MCF 10A (cell line): ENCODE measurements at regions of chr17 and their contacts with region 1.

Region 1: DNA sequence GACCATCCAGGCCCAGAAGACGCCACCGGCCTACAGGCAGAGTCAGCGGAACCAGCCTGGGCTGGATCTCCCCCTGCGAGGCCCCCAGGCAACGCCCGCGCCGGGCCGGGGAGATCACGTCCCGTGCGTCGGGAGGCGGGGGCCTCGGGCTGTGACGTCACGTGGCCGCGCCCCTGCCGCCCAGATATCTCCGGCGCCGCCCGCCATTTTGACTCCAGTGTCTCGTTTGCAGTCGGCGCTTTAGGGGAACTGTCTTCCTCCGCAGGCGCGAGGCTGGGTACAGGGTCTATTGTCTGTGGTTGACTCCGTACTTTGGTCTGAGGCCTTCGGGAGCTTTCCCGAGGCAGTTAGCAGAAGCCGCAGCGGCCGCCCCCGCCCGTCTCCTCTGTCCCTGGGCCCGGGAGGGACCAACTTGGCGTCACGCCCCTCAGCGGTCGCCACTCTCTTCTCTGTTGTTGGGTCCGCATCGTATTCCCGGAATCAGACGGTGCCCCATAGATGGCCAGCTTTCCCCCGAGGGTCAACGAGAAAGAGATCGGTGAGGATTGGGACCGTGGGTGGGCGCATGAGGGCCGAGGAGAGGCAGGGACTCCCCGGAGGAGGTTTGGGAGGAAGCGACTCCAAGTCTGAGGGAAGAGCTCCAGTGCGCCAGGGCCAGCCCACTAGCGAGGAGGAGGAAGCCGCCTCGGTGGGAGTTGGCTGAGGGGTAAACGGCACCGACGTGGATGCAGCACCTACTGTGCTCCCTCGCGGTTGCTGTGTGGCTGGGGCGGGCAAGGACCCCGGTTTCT is at the start of gene WSB1:
- DNase-seq: peak; percentile 89
- H3K4me3 Mint-ChIP-seq: peak within 1 kb of the TSS; percentile 89
- H3K27ac Mint-ChIP-seq: peak within 1 kb of the TSS; percentile 96
- H3K4me1 Mint-ChIP-seq: peaks cover 12% of the 10 kb centered on the region
- H3K27me3 Mint-ChIP-seq: no peaks in the 10 kb centered on the region
- CTCF ChIP-seq: no peak
- total RNA-seq, gene WSB1: 93.1 and 145 TPM in 2 replicates

Region 2: GRCh38 chr17:27245230-27245696 is 48.8 kb before region 1 on chr17:
- CTCF ChIA-PET with region 1: interaction called, 7 read pairs
- POLR2A ChIA-PET with region 1: interaction called, 90 read pairs
- intact Hi-C with region 1: loop called (anchors 1 kb)
- DNase-seq: peak; percentile 89
- H3K4me3 Mint-ChIP-seq: peak overlapping the region; percentile 49
- H3K27ac Mint-ChIP-seq: peak overlapping the region; percentile 74
- H3K4me1 Mint-ChIP-seq: peaks cover 48% of the 10 kb centered on the region
- H3K27me3 Mint-ChIP-seq: peaks cover 4% of the 10 kb centered on the region
- CTCF ChIP-seq: peak; percentile 68

Region 3: DNA sequence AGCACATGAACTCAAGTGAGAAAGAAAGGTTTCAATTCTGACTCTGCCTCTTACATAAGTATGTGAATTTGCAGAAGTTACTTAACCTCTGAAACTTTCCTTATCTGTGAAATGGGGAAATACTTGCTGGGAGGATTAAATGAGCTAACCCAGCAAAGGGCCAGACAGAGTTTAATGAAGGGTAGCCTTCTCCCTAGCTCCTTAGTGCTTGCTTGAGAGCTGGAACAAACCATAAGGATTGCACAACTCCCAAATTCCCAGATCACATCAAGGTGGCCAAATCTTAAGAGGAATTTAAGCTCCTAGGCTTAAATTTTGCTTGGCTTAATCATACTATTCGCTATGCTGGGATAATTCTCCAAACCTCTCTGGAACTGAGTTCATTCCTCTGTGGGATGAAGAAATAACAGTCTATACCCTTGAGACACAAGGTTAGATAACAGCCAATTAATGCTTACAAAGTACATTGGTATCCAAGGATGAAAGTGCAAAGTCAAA is 12.0 kb before region 1 on chr17:
- CTCF ChIA-PET with region 1: interaction called, 5 read pairs
- POLR2A ChIA-PET with region 1: interaction called, 42 read pairs
- intact Hi-C with region 1: no loop called
- DNase-seq: peak; percentile 45
- H3K4me3 Mint-ChIP-seq: no peak overlapping the region
- H3K27ac Mint-ChIP-seq: no peak overlapping the region
- H3K4me1 Mint-ChIP-seq: peaks cover 11% of the 10 kb centered on the region
- H3K27me3 Mint-ChIP-seq: no peaks in the 10 kb centered on the region
- CTCF ChIP-seq: no peak

Region 4: GRCh38 chr17:27315322-27315721 is 21.2 kb after region 1 on chr17:
- CTCF ChIA-PET with region 1: interaction called, 5 read pairs
- POLR2A ChIA-PET with region 1: interaction called, 53 read pairs
- intact Hi-C with region 1: no loop called
- DNase-seq: peak; percentile 28
- H3K4me3 Mint-ChIP-seq: no peak overlapping the region
- H3K27ac Mint-ChIP-seq: peak overlapping the region; percentile 54
- H3K4me1 Mint-ChIP-seq: peaks cover 17% of the 10 kb centered on the region
- H3K27me3 Mint-ChIP-seq: no peaks in the 10 kb centered on the region
- CTCF ChIP-seq: no peak

Region 5: GRCh38 chr17:27332485-27333409 is 38.7 kb after region 1 on chr17:
- CTCF ChIA-PET with region 1: interaction called, 4 read pairs
- POLR2A ChIA-PET with region 1: interaction called, 68 read pairs
- intact Hi-C with region 1: loop called (anchors 2 kb)
- DNase-seq: peak; percentile 98
- H3K4me3 Mint-ChIP-seq: peak overlapping the region; percentile 71
- H3K27ac Mint-ChIP-seq: peak overlapping the region; percentile 79
- H3K4me1 Mint-ChIP-seq: peaks cover 34% of the 10 kb centered on the region
- H3K27me3 Mint-ChIP-seq: no peaks in the 10 kb centered on the region
- CTCF ChIP-seq: peak; percentile 98

Region 6: DNA sequence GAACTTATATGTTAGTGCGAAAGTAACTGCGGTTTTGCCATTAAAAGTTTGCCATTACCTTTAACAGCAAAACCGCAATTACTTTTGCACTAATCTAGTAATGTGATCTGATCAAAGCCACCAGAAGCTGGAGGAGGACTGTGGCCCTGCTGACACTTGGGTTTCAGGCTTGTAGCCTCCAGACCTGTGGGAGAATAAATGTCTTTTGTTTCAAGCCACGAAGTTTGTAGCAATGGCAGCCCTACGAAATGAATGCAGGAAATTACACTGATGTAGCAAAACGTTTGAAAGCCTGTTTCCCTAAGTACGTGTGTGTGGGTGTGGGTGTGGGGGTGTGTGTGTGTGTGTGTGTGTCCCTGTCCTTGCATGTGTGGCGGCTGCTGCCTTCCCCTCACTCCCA is 66.4 kb after region 1 on chr17:
- CTCF ChIA-PET with region 1: no interaction called
- POLR2A ChIA-PET with region 1: no interaction called
- intact Hi-C with region 1: no loop called
- DNase-seq: no peak
- H3K4me3 Mint-ChIP-seq: no peak overlapping the region
- H3K27ac Mint-ChIP-seq: no peak overlapping the region
- H3K4me1 Mint-ChIP-seq: no peaks in the 10 kb centered on the region
- H3K27me3 Mint-ChIP-seq: no peaks in the 10 kb centered on the region
- CTCF ChIP-seq: no peak

Region 7: DNA sequence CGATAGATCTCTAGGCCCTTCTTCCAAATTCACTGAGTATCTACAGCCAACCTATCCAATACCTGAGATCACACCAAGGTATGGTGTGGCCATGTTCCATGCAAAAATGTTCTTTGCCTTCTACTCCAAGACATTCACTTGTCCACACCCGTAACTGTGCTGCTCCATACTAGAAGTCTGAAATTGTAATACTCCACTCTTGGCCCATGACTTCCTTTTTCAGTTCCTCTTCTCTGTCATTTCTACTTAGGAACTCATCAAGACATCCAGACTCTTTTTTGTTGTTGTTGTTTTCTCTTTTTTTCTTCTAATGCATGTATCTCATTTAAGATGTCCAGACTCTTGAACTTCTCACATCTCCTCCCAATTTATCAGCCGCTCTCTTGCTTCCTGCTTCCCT is 119.7 kb after region 1 on chr17:
- CTCF ChIA-PET with region 1: no interaction called
- POLR2A ChIA-PET with region 1: no interaction called
- intact Hi-C with region 1: no loop called
- DNase-seq: no peak
- H3K4me3 Mint-ChIP-seq: no peak overlapping the region
- H3K27ac Mint-ChIP-seq: no peak overlapping the region
- H3K4me1 Mint-ChIP-seq: peaks cover 5% of the 10 kb centered on the region
- H3K27me3 Mint-ChIP-seq: peaks cover 8% of the 10 kb centered on the region
- CTCF ChIP-seq: no peak